ENCODE measurements at regions of chr14 and their contacts with region 1.

Region 1: DNA sequence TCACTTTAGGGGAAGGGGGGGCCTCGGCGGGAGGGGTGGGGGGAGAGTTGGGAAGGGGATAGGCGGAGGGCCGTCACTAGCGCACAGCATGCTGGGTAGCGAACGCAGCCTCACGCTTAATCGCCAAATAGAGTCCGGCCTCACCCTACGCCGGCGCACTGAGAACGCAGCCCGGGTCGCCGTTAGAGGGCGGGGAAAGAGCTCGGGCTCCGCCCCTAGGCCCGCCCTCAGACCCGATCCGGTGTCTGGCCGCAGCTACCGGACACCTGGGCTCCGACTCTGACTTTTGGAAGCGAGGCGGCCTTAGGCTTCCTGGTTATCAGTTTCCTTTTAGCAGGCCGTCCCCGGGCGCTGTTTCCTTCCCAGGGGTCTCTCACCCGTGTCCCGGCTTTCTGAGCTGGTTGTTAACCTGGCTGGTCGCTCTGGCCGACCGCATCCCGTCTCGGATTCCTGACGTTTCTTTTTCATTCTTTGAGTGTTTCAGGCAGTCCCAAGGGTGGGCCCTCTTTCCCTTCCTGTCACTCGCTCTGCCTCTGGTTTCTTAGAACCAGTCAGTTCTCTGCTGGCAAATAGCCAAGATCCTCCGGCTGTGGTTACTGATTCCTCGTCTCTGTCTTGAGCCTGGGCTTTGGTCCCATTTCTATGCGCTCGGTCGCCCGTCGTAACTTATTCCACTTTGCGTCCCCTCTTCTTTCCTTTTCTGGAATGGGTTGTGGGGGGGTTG is 378 bp upstream of the STRN3 start:
- DNase-seq: peak; percentile 95
- H3K4me3 ChIP-seq: peak overlapping the region; percentile 58 to 96 (median 80)
- H3K27ac ChIP-seq: peak overlapping the region; percentile 90
- H3K4me1 ChIP-seq: peaks cover 19% of the 10 kb centered on the region
- H3K27me3 ChIP-seq: no peaks in the 10 kb centered on the region
- CTCF ChIP-seq: no peak

Region 2: GRCh38 chr14:30906752-30907658 is 119.6 kb before region 1 on chr14:
- CTCF ChIA-PET with region 1: interaction called, 22 read pairs
- dilution Hi-C with region 1: no loop called
- in situ Hi-C with region 1: no loop called
- intact Hi-C with region 1: no loop called
- DNase-seq: peak; percentile 34
- H3K4me3 ChIP-seq: no peak overlapping the region
- H3K27ac ChIP-seq: peak overlapping the region; percentile 40
- H3K4me1 ChIP-seq: peaks cover 12% of the 10 kb centered on the region
- H3K27me3 ChIP-seq: no peaks in the 10 kb centered on the region
- CTCF ChIP-seq: peak; percentile 12 to 35

Region 3: DNA sequence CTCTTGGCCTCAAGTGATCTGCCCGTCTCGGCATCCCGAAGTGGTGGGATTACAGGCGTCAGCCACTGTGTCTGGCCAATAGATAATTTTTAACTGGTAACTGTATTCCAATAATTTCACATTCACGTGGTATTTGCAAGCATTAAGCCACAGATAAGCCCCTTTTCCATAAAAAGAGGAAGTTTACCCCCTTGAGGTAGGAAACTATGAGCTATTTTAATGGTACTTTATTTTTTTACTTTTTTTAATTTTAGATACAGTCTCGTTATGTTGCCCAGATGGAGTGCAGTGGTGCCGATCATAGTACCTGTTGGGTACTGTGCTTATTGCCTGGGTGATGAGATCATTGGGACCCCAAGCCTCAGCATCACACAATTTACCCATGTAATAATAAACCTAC is 44.0 kb before region 1 on chr14:
- CTCF ChIA-PET with region 1: interaction called, 4 read pairs
- dilution Hi-C with region 1: no loop called
- in situ Hi-C with region 1: no loop called
- intact Hi-C with region 1: loop called (anchors 2 kb)
- DNase-seq: no peak
- H3K4me3 ChIP-seq: no peak overlapping the region
- H3K27ac ChIP-seq: no peak overlapping the region
- H3K4me1 ChIP-seq: no peaks in the 10 kb centered on the region
- H3K27me3 ChIP-seq: no peaks in the 10 kb centered on the region
- CTCF ChIP-seq: no peak

Region 4: DNA sequence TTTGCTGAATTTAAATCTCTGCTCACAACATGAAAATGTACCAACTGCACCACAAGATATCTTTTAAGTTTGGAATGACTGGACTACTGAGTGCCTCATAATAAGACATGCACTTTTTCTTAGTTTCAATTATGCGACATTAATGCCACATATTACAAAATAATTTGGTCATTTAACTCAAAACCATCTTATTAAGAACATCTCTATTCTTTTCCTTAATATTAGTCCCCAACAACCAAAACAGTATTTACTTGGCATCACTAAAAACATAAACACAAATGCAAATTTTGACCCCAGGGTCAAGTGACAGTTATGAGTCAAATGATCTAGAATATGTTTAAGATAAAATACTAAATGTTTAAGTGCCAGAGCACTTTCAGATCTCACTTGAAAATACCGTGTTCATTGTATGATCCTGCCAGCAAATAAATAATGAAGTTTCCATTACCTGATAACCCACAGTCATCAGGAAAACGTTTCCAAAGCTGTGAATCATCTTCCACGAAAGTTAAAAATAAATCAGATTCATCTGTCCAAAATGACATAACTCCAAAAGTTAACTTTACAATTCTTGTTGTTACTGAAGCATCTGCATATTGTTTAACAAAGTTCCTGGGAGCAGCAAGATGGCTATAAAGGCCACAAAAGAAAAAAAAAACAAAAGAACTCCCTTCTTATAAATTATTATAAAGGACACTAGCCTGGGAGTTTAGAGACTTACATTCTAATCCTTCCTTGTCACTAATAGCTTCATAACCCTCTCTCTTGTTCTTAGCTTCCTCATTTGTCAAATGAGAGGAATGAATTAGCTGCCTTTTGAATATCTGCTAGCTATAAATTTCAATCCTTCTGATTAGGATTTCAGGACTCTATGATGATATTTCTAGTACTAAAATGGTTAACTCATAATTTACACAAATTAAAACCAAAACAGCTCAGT is 31.6 kb before region 1 on chr14:
- CTCF ChIA-PET with region 1: no interaction called
- dilution Hi-C with region 1: no loop called
- in situ Hi-C with region 1: no loop called
- intact Hi-C with region 1: loop called (anchors 2 kb)
- DNase-seq: peak; percentile 32
- H3K4me3 ChIP-seq: no peak overlapping the region
- H3K27ac ChIP-seq: peak overlapping the region; percentile 55
- H3K4me1 ChIP-seq: peaks cover 25% of the 10 kb centered on the region
- H3K27me3 ChIP-seq: no peaks in the 10 kb centered on the region
- CTCF ChIP-seq: no peak

Region 5: DNA sequence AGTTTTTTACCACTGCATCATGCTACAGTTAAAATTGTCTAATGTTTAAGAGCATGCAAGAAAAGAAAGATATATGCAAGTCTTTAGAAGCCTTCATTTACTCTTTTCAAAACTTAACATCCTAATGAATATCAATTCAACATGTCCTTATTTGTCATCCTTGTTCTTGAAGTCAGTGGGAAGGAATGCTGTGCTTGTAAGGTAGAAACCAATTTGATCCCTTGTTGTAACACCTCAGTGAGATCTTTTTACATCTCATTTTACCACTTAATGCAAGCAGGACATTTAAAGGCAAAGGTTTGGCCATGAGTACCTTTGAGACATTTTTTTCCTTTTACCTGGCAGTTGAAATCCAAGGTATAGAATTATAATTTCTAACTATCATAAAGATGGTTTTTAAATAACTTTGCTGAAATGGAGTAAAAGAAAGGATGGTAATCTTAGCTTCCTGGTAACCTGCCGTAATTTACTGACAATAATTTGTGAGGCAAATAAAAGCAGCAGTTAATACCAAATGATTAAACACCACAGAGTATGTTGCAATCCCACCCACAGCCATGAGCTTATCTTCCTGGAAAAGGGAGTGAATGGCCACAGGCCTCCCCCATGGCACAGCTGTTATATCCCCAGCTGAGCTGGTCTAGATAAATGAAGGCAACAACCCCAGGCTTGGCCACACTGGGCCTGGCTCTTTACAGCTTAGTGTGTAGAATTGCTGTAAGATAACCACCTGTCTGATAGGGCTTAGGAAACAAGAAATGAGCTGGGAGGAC is 32.8 kb after region 1 on chr14:
- CTCF ChIA-PET with region 1: no interaction called
- dilution Hi-C with region 1: no loop called
- in situ Hi-C with region 1: no loop called
- intact Hi-C with region 1: loop called (anchors 1 kb)
- DNase-seq: peak; percentile 75
- H3K4me3 ChIP-seq: peak overlapping the region in 1 of 3 experiments; percentile 23
- H3K27ac ChIP-seq: peak overlapping the region; percentile 92
- H3K4me1 ChIP-seq: peaks cover 45% of the 10 kb centered on the region
- H3K27me3 ChIP-seq: no peaks in the 10 kb centered on the region
- CTCF ChIP-seq: no peak

Region 6: GRCh38 chr14:31070431-31070830 is 43.9 kb after region 1 on chr14:
- CTCF ChIA-PET with region 1: no interaction called
- dilution Hi-C with region 1: no loop called
- in situ Hi-C with region 1: loop called (anchors 5 to 10 kb)
- intact Hi-C with region 1: no loop called
- DNase-seq: peak; percentile 83
- H3K4me3 ChIP-seq: no peak overlapping the region
- H3K27ac ChIP-seq: peak overlapping the region; percentile 40
- H3K4me1 ChIP-seq: peaks cover 6% of the 10 kb centered on the region
- H3K27me3 ChIP-seq: no peaks in the 10 kb centered on the region
- CTCF ChIP-seq: no peak

Region 7: GRCh38 chr14:31084385-31084784 is 57.8 kb after region 1 on chr14:
- CTCF ChIA-PET with region 1: no interaction called
- dilution Hi-C with region 1: no loop called
- in situ Hi-C with region 1: loop called in 1 of 2 experiments (anchors 10 kb)
- intact Hi-C with region 1: loop called (anchors 1 kb)
- DNase-seq: no peak
- H3K4me3 ChIP-seq: no peak overlapping the region
- H3K27ac ChIP-seq: no peak overlapping the region
- H3K4me1 ChIP-seq: peaks cover 7% of the 10 kb centered on the region
- H3K27me3 ChIP-seq: no peaks in the 10 kb centered on the region
- CTCF ChIP-seq: no peak